PC-3 (cell line): ENCODE measurements at regions of chr4 and their contacts with region 1.

Region 1: DNA sequence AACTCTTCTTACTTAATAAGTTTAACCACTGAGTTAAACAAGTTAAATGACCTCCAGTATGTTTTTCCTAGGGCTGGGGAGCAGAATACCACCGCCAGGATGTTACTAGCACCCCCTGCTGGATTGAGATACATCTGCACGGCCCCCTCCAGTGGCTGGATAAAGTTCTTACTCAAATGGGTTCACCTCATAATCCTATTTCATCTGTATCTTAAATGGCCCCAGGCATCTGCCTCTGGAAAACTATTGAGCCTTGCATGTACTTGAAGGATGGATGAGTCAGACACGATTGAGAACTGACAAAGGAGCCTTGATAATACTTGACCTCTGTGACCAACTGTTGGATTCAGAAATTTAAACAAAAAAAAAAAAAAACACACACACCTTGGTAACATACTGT is 61.5 kb upstream of the MMAA start:
- DNase-seq: peak; percentile 86
- ATAC-seq: peak; percentile 87
- H3K4me3 ChIP-seq: no peak overlapping the region
- H3K27ac ChIP-seq: no peak overlapping the region
- H3K4me1 ChIP-seq: peaks cover 10% of the 10 kb centered on the region
- H3K27me3 ChIP-seq: no peaks in the 10 kb centered on the region
- CTCF ChIP-seq: peak; percentile 99

Region 2: DNA sequence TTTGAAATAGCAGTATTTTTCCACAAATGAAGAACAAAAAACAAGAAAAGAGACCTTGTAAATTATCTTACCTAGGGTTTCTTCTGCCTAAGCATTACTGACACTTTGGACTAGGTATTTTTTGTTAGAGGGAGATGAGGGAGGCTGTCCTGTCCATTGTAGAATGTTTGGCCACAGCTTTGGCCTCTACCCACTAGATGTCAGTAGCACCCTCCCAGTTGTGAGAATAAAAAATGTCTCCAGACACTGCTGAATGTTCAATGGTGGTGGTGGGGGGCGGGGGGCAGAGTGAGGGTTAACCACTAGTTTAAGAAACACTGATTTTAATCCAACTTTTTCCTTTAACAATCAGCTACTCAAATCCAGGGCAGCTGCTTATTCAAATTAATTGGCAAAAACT is 403.1 kb before region 1 on chr4:
- CTCF ChIA-PET with region 1: no interaction called
- POLR2A ChIA-PET with region 1: no interaction called
- intact Hi-C with region 1: loop called (anchors 10 kb)
- DNase-seq: peak; percentile 47
- ATAC-seq: peak; percentile 75
- H3K4me3 ChIP-seq: no peak overlapping the region
- H3K27ac ChIP-seq: no peak overlapping the region
- H3K4me1 ChIP-seq: no peaks in the 10 kb centered on the region
- H3K27me3 ChIP-seq: no peaks in the 10 kb centered on the region
- CTCF ChIP-seq: peak; percentile 75

Region 3: GRCh38 chr4:145216535-145216934 is 341.2 kb before region 1 on chr4:
- CTCF ChIA-PET with region 1: no interaction called
- POLR2A ChIA-PET with region 1: no interaction called
- intact Hi-C with region 1: loop called (anchors 5 kb)
- DNase-seq: peak; percentile 61
- ATAC-seq: no peak
- H3K4me3 ChIP-seq: no peak overlapping the region
- H3K27ac ChIP-seq: no peak overlapping the region
- H3K4me1 ChIP-seq: no peaks in the 10 kb centered on the region
- H3K27me3 ChIP-seq: peaks cover 3% of the 10 kb centered on the region; the same call in 1 of the 2 replicates
- CTCF ChIP-seq: peak; percentile 89

Region 4: DNA sequence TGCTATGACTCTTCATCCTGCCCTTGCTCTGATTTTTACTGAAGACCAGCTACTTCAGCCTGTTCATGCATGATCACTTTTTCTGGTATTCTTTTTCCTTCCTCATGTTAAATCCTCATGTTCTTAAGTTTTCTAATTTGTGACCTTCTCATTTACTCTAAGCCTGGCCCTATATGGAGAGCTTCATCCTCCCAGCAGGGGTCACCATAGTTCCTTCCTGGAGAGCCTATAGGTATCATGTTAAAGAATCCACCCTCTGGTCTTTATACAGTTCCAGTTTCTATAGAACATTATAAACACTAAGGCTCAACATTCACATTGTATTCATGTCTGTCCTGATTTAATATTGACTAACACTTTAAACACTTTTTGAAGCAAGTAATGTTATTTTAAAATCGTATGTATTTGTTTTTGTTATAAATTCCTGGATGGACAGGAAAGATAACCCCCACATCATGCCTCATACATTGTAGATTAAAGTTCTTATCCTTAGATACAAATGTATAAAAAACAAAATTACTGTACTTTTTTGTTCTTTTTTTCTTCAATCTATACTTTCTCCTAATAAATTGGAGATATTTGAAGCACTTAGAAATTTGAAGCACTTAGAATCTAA is 323.5 kb before region 1 on chr4:
- CTCF ChIA-PET with region 1: interaction called, 4 read pairs
- POLR2A ChIA-PET with region 1: no interaction called
- intact Hi-C with region 1: loop called (anchors 1 kb)
- DNase-seq: peak; percentile 87
- ATAC-seq: peak; percentile 100
- H3K4me3 ChIP-seq: no peak overlapping the region
- H3K27ac ChIP-seq: no peak overlapping the region
- H3K4me1 ChIP-seq: 0 out of 2 replicates have a peak, but pooled peaks cover 5% of the 10 kb centered on the region
- H3K27me3 ChIP-seq: no peaks in the 10 kb centered on the region
- CTCF ChIP-seq: peak; percentile 98

Region 5: GRCh38 chr4:145481164-145481941 is 76.4 kb before region 1 on chr4 and contains the start of gene SMAD1:
- CTCF ChIA-PET with region 1: no interaction called
- POLR2A ChIA-PET with region 1: no interaction called
- intact Hi-C with region 1: loop called (anchors 2 kb)
- DNase-seq: peak; percentile 81
- ATAC-seq: peak; percentile 83
- H3K4me3 ChIP-seq: peak within 1 kb of the TSS; percentile 83
- H3K27ac ChIP-seq: peak within 1 kb of the TSS; percentile 26; the same call in 1 of the 2 replicates
- H3K4me1 ChIP-seq: peaks cover 23% of the 10 kb centered on the region; the same call in 1 of the 2 replicates
- H3K27me3 ChIP-seq: no peaks in the 10 kb centered on the region
- CTCF ChIP-seq: no peak
- total RNA-seq, gene SMAD1: 13.3 and 14.8 TPM in 2 replicates

Region 6: GRCh38 chr4:145531223-145531622 is 26.5 kb before region 1 on chr4:
- CTCF ChIA-PET with region 1: no interaction called
- POLR2A ChIA-PET with region 1: no interaction called
- intact Hi-C with region 1: no loop called
- DNase-seq: no peak
- ATAC-seq: no peak
- H3K4me3 ChIP-seq: no peak overlapping the region
- H3K27ac ChIP-seq: no peak overlapping the region
- H3K4me1 ChIP-seq: peaks cover 27% of the 10 kb centered on the region
- H3K27me3 ChIP-seq: no peaks in the 10 kb centered on the region
- CTCF ChIP-seq: no peak

Region 7: GRCh38 chr4:145541346-145541745 is 16.4 kb before region 1 on chr4:
- CTCF ChIA-PET with region 1: no interaction called
- POLR2A ChIA-PET with region 1: no interaction called
- intact Hi-C with region 1: no loop called
- DNase-seq: peak; percentile 5
- ATAC-seq: no peak
- H3K4me3 ChIP-seq: no peak overlapping the region
- H3K27ac ChIP-seq: no peak overlapping the region
- H3K4me1 ChIP-seq: peaks cover 18% of the 10 kb centered on the region
- H3K27me3 ChIP-seq: no peaks in the 10 kb centered on the region
- CTCF ChIP-seq: no peak

Region 8: DNA sequence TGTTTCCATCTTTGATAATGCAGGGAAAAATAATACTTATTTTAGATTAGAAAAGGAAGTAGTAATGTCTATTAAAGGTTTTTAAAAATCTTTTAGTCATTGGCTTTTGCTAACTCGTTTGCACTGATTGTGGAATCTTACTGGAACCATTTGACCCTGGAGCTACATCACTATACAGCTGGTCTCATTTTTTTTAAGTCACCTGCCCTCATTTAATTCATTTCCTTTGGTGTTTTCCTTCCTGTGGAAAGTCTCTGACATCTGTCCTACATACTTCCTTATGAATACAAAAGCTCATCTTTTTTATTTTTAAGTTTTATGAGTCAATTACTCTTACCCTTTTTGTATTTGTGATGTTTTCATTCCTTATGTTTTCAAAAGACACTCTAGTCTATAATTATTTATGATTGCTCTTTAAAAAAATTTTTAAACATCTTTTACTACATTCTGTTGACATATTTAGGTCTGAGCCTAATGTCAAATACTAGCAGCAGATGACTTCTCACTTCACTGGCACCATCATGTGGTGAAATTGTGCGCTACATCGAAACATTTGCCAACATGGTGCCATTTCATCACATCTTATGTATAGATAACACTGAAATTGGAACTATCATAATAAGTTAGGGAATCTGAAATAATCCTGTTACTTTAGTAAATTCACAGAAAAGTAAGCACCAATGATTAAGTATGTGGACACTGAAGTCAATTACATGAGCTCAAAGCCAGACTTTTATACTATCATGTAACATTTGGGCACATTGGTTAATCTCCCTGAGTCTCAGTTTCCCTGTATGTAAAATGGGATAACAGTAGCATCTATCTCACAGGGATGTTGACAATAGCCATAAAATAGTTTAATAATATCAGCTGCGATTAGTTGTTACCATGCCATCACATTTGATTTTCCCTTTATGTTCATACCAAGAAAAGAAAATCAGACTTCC is 52.0 kb after region 1 on chr4:
- CTCF ChIA-PET with region 1: no interaction called
- POLR2A ChIA-PET with region 1: no interaction called
- intact Hi-C with region 1: loop called (anchors 2 kb)
- DNase-seq: peak; percentile 90
- ATAC-seq: peak; percentile 73
- H3K4me3 ChIP-seq: no peak overlapping the region
- H3K27ac ChIP-seq: no peak overlapping the region
- H3K4me1 ChIP-seq: no peaks in the 10 kb centered on the region
- H3K27me3 ChIP-seq: no peaks in the 10 kb centered on the region
- CTCF ChIP-seq: peak; percentile 96